ENCODE measurements at regions of chr1 and their contacts with region 1.

Region 1: DNA sequence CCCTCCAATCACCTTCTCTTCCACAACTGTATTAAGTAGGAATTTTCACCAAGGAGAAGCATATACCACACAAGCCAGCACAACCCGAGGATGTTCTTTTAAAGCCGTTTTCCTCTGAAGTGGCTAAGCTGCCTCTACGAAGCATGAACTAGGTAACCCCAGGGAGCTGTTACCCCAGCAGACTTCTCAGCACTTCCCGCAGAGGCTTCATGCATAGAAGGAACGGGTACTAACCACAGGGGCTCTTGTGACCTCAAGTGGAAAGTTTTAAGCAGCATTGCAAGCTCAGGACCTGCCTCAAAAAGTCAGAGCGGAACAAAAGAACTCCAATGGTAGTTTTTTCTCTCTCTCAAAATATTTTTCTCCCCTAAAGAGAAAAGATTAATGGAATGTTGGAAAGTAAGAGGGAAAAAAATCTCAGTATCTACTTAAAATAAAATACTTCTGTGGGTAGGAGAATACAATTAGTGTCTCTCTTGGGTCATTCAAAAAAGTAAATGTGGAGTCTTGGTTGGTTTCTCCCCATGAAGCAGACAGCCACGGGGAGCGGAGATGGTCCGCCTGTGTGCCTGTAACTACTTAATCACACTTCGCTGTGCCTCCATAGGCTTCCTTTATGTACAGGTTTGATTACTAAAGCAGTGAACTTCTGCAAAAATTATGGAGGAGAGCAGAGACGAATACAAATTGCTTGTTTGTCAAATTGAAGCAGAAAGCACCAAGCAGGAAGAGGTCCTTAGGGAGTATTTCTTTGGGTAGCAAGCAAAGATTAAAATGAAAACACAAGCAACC is 40.9 kb downstream of the STX6 start:
- DNase-seq: peak; percentile 49
- H3K4me3 Mint-ChIP-seq: peak overlapping the region; percentile 55
- H3K27ac Mint-ChIP-seq: peak overlapping the region; percentile 69
- H3K4me1 Mint-ChIP-seq: peaks cover 27% of the 10 kb centered on the region
- H3K27me3 Mint-ChIP-seq: no peaks in the 10 kb centered on the region

Region 2: GRCh38 chr1:181014477-181015250 is 32.9 kb after region 1 on chr1:
- intact Hi-C with region 1: loop called (anchors 1 kb)
- DNase-seq: no peak
- H3K4me3 Mint-ChIP-seq: no peak overlapping the region
- H3K27ac Mint-ChIP-seq: no peak overlapping the region
- H3K4me1 Mint-ChIP-seq: peaks cover 47% of the 10 kb centered on the region
- H3K27me3 Mint-ChIP-seq: no peaks in the 10 kb centered on the region

Region 3: DNA sequence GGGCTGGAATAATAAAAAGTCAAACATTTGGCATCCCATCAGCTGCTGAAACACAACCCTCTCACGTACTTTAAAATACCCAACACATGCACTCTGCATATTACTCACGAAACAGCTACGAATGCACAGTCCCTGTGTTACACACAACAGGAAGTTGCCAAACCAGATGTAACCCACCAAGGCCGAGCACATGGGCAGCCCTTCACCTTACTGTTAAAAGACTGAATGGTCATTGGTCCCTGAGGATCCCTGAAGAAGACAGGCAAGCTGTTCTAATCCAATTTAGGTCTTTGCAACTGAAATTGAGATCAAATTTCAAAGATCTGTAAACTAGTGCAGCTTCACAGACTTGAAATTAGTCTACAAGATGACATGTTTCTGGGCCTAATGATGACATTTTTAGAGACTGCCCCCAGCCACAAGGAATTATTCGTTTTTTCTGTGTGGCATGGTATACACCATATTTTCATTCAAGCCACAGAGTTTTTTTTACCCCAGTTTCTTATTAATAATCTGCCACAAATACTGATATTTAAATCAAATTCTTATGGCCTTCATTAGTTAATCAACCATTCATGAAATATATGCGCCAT is 81.1 kb after region 1 on chr1:
- intact Hi-C with region 1: no loop called
- DNase-seq: no peak
- H3K4me3 Mint-ChIP-seq: peak overlapping the region; percentile 55
- H3K27ac Mint-ChIP-seq: peak overlapping the region; percentile 73
- H3K4me1 Mint-ChIP-seq: peaks cover 22% of the 10 kb centered on the region
- H3K27me3 Mint-ChIP-seq: no peaks in the 10 kb centered on the region